HCT116 (cell line): ENCODE measurements at regions of chr2 and their contacts with region 1.

Region 1: GRCh38 chr2:677056-677965 is at the start of gene TMEM18:
- DNase-seq: peak; percentile 99
- ATAC-seq: peak; percentile 65
- H3K4me3 ChIP-seq: peak within 1 kb of the TSS; percentile 84 to 86
- H3K27ac ChIP-seq: peak within 1 kb of the TSS; percentile 96
- H3K4me1 ChIP-seq: peaks cover 5 to 16% of the 10 kb centered on the region in 2 experiments; a peak in 3 of 4 replicates
- H3K27me3 ChIP-seq: no peaks in the 10 kb centered on the region
- CTCF ChIP-seq: peak in 1 of 3 experiments; percentile 21; a peak in 2 of 6 replicates
- POLR2A ChIP-seq: peak; percentile 95
- RAD21 ChIP-seq: no peak
- total RNA-seq, gene TMEM18: 33.5 TPM

Region 2: DNA sequence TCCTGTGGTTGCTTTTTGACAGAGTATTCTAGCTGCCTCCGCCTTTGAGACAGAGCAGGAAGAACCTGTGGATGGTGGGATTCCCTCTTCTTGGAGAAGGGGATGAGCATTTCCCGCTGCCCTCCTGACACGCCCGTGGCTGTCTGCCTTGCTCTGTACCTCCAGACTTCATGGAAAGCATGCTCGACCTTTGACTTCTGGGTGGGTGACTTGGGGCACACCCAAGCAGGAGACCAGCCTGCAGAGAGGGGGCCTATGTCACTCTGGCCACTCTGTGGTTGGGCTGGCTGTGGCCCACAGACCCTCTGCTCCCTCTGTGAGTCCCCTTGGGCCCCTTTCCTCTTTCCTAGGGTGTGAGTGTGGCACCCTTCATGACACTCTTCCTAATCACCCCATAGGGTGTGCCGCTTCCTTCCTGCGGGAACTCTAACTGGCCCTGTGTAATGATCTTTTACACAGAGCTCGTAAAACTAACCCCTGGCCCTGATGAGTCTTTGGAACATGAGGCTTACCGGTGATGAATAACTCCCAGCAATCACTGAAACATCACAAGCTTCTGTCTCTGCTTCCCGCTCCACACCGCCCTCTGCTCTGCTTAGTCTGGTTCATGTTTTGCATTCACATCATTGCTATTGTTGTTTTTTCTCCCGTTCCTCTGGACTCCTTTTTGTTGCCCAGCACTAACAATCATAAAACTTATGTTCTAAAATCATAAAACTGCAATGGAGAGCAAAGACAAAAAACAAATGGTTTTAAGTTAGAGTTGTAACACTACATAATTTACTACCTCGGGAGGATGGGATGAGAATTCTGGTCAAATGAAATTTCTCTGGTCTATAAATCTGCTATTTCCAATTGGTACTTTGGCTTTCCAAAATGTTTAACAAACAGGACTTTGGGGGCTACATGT is 514.6 kb before region 1 on chr2:
- CTCF ChIA-PET with region 1: no interaction called
- POLR2A ChIA-PET with region 1: no interaction called
- RAD21 ChIA-PET with region 1: no interaction called
- intact Hi-C with region 1: no loop called
- DNase-seq: no peak
- ATAC-seq: peak; percentile 59
- H3K4me3 ChIP-seq: no peak overlapping the region
- H3K27ac ChIP-seq: no peak overlapping the region
- H3K4me1 ChIP-seq: peaks cover 0 to 9% of the 10 kb centered on the region in 2 experiments; a peak in 1 of 4 replicates
- H3K27me3 ChIP-seq: no peaks in the 10 kb centered on the region
- CTCF ChIP-seq: no peak
- POLR2A ChIP-seq: no peak
- RAD21 ChIP-seq: no peak

Region 3: DNA sequence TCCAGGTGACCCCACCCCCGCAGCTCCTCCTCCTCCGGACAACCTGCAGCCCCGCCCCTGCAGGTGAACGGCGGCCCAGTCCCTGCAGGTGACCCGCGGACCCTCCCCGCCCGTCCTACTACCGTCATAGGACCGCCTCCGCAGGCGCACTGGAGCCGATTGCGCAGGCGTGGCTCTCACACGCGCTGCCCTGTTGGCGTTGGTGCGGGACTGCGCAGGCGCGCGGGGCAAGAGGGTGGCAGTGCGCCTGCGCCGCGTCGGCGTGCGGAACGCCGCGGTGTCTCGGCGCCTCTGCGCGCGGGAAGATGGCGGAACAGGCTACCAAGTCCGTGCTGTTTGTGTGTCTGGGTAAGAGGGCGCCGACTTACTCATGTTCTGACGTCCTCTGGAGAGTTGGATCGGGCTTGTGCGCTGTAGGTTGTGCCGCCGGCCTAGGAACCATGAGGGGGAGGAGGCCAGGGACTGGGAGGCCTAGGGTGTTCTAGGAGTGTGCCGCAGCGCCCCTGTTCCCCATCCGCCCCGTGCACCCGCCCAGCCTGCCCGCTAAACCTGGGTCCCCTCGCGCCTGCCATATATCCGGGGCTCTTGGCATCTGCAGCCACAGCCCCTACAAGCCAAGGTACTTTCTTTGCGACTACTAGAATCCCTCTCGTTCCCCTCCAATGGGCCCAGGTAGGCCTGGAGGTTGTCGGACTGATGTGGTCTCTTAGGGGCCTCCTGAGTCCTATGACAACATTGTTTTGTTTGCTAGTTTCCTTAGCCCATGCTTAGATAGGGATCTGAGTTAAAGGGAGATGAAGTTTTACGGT is 412.4 kb before region 1 on chr2 and contains the start of gene ACP1:
- CTCF ChIA-PET with region 1: no interaction called
- POLR2A ChIA-PET with region 1: no interaction called
- RAD21 ChIA-PET with region 1: no interaction called
- intact Hi-C with region 1: loop called (anchors 2 kb)
- DNase-seq: peak; percentile 94
- ATAC-seq: peak; percentile 92
- H3K4me3 ChIP-seq: peak within 1 kb of the TSS; percentile 82 to 96
- H3K27ac ChIP-seq: peak within 1 kb of the TSS; percentile 80
- H3K4me1 ChIP-seq: peaks cover 12 to 27% of the 10 kb centered on the region in 2 experiments; a peak in 3 of 4 replicates
- H3K27me3 ChIP-seq: no peaks in the 10 kb centered on the region
- CTCF ChIP-seq: 0 out of 6 replicates have a peak, but pooled peaks of 2 of the 3 experiments have one; percentile 2 to 6
- POLR2A ChIP-seq: peak; percentile 41
- RAD21 ChIP-seq: no peak
- total RNA-seq, gene ACP1: 113 TPM

Region 4: DNA sequence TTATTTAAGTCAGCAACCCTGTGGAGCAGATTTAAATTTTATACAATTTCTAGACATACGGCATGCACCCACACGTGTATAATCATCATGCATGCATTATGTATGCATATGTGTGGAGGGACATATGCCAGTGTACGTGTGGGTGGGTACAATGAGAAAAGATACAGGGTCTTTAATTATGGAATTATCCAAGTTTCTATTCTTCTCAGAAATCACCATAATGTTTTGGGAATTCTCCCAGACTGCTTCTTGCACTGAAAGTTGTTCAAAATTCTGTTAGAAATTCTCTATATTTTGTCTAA is 63.8 kb after region 1 on chr2:
- CTCF ChIA-PET with region 1: no interaction called
- POLR2A ChIA-PET with region 1: interaction called, 4 read pairs
- RAD21 ChIA-PET with region 1: no interaction called
- intact Hi-C with region 1: loop called (anchors 2 kb)
- DNase-seq: no peak
- ATAC-seq: 0 out of 2 replicates have a peak, but pooled peaks have one; percentile 3
- H3K4me3 ChIP-seq: peak overlapping the region; percentile 50 to 58
- H3K27ac ChIP-seq: peak overlapping the region; percentile 72; the same call in 1 of the 2 replicates
- H3K4me1 ChIP-seq: peaks cover 11 to 15% of the 10 kb centered on the region in 2 experiments
- H3K27me3 ChIP-seq: no peaks in the 10 kb centered on the region
- CTCF ChIP-seq: no peak
- POLR2A ChIP-seq: no peak
- RAD21 ChIP-seq: no peak

Region 5: DNA sequence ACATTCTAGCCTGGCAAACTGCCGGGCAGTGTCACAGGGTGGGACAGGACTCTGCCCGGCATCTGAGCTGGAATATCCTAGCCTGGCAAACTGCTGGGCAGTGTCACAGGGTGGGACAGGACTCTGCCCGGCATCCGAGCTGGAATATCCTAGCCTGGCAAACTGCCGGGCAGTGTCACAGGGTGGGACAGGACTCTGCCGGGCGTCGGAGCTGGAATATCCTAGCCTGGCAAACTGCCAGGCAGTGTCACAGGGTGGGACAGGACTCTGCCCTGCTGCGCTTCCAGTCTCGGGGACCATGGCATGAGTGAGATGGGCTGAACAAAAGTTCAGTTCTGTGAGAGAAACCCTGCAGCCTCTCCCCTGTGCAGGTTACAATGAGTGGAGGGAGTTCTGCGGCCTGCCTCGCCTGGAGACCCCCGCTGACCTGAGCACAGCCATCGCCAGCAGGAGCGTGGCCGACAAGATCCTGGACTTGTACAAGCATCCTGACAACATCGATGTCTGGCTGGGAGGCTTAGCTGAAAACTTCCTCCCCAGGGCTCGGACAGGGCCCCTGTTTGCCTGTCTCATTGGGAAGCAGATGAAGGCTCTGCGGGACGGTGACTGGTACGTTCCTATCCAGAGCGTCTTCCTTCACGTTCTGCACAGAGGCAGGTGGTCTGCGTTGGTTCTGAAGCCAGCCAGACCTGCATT is 816.3 kb after region 1 on chr2:
- CTCF ChIA-PET with region 1: no interaction called
- POLR2A ChIA-PET with region 1: no interaction called
- RAD21 ChIA-PET with region 1: no interaction called
- intact Hi-C with region 1: no loop called
- DNase-seq: no peak
- ATAC-seq: no peak
- H3K4me3 ChIP-seq: no peak overlapping the region
- H3K27ac ChIP-seq: no peak overlapping the region
- H3K4me1 ChIP-seq: no peaks in the 10 kb centered on the region
- H3K27me3 ChIP-seq: no peaks in the 10 kb centered on the region
- CTCF ChIP-seq: no peak
- POLR2A ChIP-seq: no peak
- RAD21 ChIP-seq: no peak

Region 6: DNA sequence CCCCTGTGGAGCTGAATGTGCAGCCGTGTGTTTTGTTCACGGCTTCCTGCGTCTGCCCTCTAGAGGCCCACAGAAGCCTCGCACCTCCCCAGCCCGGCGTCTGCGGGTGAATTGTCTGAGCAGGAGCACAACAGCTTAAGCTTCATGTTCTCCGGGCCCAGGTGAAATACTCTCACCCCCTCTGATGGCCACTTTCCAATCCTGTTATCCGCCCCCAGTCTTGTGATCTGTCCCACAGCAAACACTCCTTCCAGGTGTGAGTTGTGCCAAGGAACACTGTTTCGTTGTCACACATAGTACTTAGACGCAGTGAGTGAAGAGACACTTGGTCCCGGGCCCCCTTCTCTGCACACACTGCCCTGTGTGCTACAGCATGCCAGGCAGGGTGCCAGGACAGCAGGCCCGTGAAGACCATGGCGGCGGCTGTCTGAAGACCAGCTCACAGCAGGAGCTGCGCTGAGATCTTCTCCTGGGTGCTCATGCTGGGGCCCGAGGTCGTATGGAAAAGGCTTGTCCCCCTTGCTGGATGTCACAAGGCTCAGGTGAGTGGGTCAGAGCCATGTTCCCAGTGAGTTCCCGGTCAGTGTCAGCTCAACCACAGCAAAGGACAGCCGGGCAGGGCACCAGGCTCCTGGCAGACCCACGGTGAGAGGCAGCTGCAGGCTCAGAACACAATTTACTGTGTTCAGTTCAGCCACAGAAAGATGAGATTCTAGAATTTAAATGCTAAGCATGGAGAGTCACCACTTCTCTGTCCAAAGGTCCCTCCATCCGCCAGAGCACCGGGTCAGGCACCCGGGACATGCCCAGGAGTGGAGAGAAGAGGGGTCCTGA is 1073.8 kb after region 1 on chr2:
- CTCF ChIA-PET with region 1: no interaction called
- POLR2A ChIA-PET with region 1: no interaction called
- RAD21 ChIA-PET with region 1: no interaction called
- intact Hi-C with region 1: no loop called
- DNase-seq: peak; percentile 42
- ATAC-seq: peak; percentile 94
- H3K4me3 ChIP-seq: no peak overlapping the region
- H3K27ac ChIP-seq: no peak overlapping the region
- H3K4me1 ChIP-seq: no peaks in the 10 kb centered on the region; a peak in 1 of 4 replicates
- H3K27me3 ChIP-seq: 0 out of 2 replicates have a peak, but pooled peaks cover 5% of the 10 kb centered on the region
- CTCF ChIP-seq: peak; percentile 42 to 87 (median 77)
- POLR2A ChIP-seq: no peak
- RAD21 ChIP-seq: peak; percentile 60